ENCODE measurements at regions of chr6 and their contacts with region 1.

Region 1: GRCh38 chr6:21593412-21593926 is at the start of gene SOX4:
- DNase-seq: peak; percentile 64
- H3K4me3 Mint-ChIP-seq: peak within 1 kb of the TSS; percentile 76
- H3K27ac Mint-ChIP-seq: peak within 1 kb of the TSS; percentile 33
- H3K4me1 Mint-ChIP-seq: peaks cover 19% of the 10 kb centered on the region
- H3K27me3 Mint-ChIP-seq: peaks cover 44% of the 10 kb centered on the region
- total RNA-seq, gene SOX4: 0.05 to 0.12 TPM

Region 2: DNA sequence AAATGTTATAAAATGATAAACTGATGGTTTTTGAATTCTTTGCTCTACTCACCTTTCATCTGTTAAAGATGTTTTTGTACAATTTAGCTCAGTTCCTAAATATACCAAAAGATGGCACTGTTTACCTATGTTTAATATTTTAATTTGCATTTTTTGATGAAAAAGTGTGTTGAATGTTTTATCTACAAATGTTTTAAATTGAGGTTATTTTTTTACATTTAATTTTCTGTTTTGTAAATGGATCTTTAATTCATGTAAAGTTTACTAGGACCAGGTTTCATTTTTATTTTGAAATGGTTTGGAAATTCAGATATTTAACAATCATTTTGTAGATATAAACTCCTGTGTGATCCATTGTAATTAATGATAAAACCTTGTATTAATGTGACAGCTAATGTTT is 1029.2 kb before region 1 on chr6:
- CTCF ChIA-PET with region 1: interaction called, 107 read pairs
- POLR2A ChIA-PET with region 1: no interaction called
- intact Hi-C with region 1: loop called (anchors 1 kb)
- DNase-seq: no peak
- H3K4me3 Mint-ChIP-seq: no peak overlapping the region
- H3K27ac Mint-ChIP-seq: no peak overlapping the region
- H3K4me1 Mint-ChIP-seq: peaks cover 9% of the 10 kb centered on the region
- H3K27me3 Mint-ChIP-seq: no peaks in the 10 kb centered on the region

Region 3: GRCh38 chr6:20877008-20877937 is 716.2 kb before region 1 on chr6:
- CTCF ChIA-PET with region 1: interaction called, 8 read pairs
- POLR2A ChIA-PET with region 1: no interaction called
- intact Hi-C with region 1: loop called (anchors 1 kb)
- DNase-seq: peak; percentile 65
- H3K4me3 Mint-ChIP-seq: no peak overlapping the region
- H3K27ac Mint-ChIP-seq: peak overlapping the region; percentile 65
- H3K4me1 Mint-ChIP-seq: peaks cover 18% of the 10 kb centered on the region
- H3K27me3 Mint-ChIP-seq: no peaks in the 10 kb centered on the region

Region 4: DNA sequence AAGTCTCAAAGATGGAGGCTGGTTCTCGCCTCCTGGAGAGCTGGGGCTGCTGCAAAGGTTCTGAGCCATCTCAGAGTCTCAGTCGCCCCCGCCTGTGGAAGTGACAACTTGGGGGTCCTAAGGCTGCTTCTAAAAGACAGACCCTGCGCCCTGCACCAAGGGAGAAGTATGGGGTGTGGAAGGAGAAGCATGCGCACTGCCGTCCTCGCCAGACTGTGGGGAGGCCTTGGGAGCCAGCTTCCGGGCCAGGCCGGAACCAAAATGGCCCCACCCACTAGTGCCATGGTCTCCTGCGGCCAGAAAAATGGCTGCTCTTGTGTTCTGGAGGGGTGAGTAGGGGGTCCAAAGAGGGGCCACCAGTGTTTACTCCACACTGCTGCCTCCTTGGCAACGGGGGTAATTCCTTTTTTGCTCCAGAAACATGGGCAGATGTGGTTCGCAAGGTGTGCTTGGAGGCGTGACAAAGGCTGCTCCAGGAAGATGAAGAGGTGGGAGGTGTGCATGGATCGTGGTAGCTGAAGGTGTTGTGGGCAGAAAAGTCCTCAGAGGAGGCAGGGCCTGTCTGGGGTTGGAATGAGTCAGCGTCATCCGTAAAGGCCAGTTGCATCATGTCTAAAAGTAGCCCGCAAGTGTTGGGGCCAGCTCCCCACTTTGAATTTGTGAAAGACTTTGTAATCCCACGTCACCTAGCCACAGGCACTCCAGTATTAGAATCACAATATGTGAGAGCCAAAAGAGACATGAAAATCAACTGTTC is 329.8 kb before region 1 on chr6:
- CTCF ChIA-PET with region 1: no interaction called
- POLR2A ChIA-PET with region 1: no interaction called
- intact Hi-C with region 1: loop called (anchors 10 kb)
- DNase-seq: peak; percentile 34
- H3K4me3 Mint-ChIP-seq: no peak overlapping the region
- H3K27ac Mint-ChIP-seq: no peak overlapping the region
- H3K4me1 Mint-ChIP-seq: peaks cover 22% of the 10 kb centered on the region
- H3K27me3 Mint-ChIP-seq: peaks cover 5% of the 10 kb centered on the region

Region 5: DNA sequence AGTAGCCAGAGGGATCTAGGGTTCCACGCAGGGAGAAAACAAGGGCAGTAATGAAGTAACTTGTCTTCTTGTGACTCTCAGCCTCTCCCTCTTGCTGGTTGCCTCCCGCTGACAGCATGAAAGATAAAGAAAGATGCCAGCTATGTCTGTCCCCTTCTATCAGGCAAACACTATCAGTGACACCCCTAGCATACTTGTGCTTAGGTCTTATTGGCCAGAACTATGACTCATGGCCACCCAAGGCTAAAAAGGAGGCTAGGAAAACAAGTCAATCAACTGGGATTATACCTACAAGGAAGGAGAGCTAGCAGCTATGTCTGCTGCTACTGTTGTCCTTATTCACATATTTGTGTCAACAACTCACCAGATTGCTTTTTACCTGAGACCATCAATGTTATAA is 206.7 kb before region 1 on chr6:
- CTCF ChIA-PET with region 1: no interaction called
- POLR2A ChIA-PET with region 1: no interaction called
- intact Hi-C with region 1: no loop called
- DNase-seq: no peak
- H3K4me3 Mint-ChIP-seq: no peak overlapping the region
- H3K27ac Mint-ChIP-seq: no peak overlapping the region
- H3K4me1 Mint-ChIP-seq: no peaks in the 10 kb centered on the region
- H3K27me3 Mint-ChIP-seq: no peaks in the 10 kb centered on the region

Region 6: DNA sequence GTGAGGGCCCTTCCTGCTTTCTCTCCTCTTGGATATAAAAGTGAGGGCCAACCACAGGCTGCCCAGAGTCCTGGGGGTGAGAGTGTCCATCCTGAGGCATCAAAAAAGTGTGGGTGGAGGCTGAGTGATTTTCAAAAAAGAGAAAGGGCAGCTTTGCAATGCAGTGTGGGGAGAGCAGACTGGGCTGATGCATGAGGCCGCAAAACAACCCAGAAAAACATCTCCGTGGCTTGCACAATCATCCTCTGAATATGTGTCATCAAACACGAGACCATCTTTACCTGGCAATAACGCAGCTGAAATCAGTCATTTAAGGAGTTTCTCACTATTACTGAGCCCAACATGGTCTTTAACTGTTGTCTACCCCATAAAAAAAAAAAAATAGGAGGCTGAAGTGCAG is 191.1 kb before region 1 on chr6:
- CTCF ChIA-PET with region 1: no interaction called
- POLR2A ChIA-PET with region 1: no interaction called
- intact Hi-C with region 1: loop called (anchors 5 kb)
- DNase-seq: peak; percentile 72
- H3K4me3 Mint-ChIP-seq: no peak overlapping the region
- H3K27ac Mint-ChIP-seq: no peak overlapping the region
- H3K4me1 Mint-ChIP-seq: peaks cover 11% of the 10 kb centered on the region
- H3K27me3 Mint-ChIP-seq: peaks cover 17% of the 10 kb centered on the region

Region 7: GRCh38 chr6:21664314-21665109 is 71.0 kb after region 1 on chr6:
- CTCF ChIA-PET with region 1: no interaction called
- POLR2A ChIA-PET with region 1: no interaction called
- intact Hi-C with region 1: loop called (anchors 5 kb)
- DNase-seq: no peak
- H3K4me3 Mint-ChIP-seq: no peak overlapping the region
- H3K27ac Mint-ChIP-seq: no peak overlapping the region
- H3K4me1 Mint-ChIP-seq: peaks cover 26% of the 10 kb centered on the region
- H3K27me3 Mint-ChIP-seq: peaks cover 58% of the 10 kb centered on the region